ENCODE measurements at regions of chr9 and their contacts with region 1.

Region 1: GRCh38 chr9:78035383-78035993 is 3.9 kb upstream of the GNAQ start:
- DNase-seq: peak; percentile 69
- H3K4me3 Mint-ChIP-seq: peak overlapping the region; percentile 34
- H3K27ac Mint-ChIP-seq: no peak overlapping the region
- H3K4me1 Mint-ChIP-seq: peaks cover 28% of the 10 kb centered on the region
- H3K27me3 Mint-ChIP-seq: no peaks in the 10 kb centered on the region

Region 2: GRCh38 chr9:77177161-77177893 is 858.2 kb before region 1 on chr9 and contains the start of gene VPS13A:
- CTCF ChIA-PET with region 1: interaction called, 3 read pairs
- intact Hi-C with region 1: loop called (anchors 5 kb)
- DNase-seq: peak; percentile 96
- H3K4me3 Mint-ChIP-seq: peak within 1 kb of the TSS; percentile 80
- H3K27ac Mint-ChIP-seq: peak within 1 kb of the TSS; percentile 79
- H3K4me1 Mint-ChIP-seq: peaks cover 23% of the 10 kb centered on the region
- H3K27me3 Mint-ChIP-seq: no peaks in the 10 kb centered on the region
- total RNA-seq, gene VPS13A: 26.8 to 26.9 TPM

Region 3: GRCh38 chr9:77648234-77649120 is 387.0 kb before region 1 on chr9 and contains the start of gene GNA14:
- CTCF ChIA-PET with region 1: interaction called, 5 read pairs
- intact Hi-C with region 1: loop called (anchors 2 kb)
- DNase-seq: peak; percentile 34
- H3K4me3 Mint-ChIP-seq: peak within 1 kb of the TSS; percentile 66
- H3K27ac Mint-ChIP-seq: no peak within 1 kb of the TSS
- H3K4me1 Mint-ChIP-seq: peaks cover 10% of the 10 kb centered on the region
- H3K27me3 Mint-ChIP-seq: peaks cover 43% of the 10 kb centered on the region
- total RNA-seq, gene GNA14: not detected

Region 4: DNA sequence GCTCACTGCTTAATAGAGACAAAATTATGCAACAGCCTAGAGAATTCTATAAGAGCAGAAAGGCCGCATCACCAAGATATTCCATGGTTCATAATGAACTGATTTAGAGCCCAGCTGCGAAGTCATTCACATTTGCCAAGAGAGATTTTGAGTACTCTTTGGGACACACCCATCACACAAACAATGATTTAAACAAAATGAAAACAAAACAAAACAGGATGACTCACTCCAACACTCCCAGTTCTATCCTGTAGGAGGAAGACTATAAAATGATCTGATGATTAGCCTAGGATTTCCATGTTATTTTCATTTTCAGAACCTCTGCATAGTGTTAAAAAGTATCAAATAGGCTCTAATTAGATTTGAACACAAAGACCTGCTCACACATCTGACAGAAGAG is 241.6 kb before region 1 on chr9:
- CTCF ChIA-PET with region 1: interaction called, 10 read pairs
- intact Hi-C with region 1: no loop called
- DNase-seq: no peak
- H3K4me3 Mint-ChIP-seq: no peak overlapping the region
- H3K27ac Mint-ChIP-seq: no peak overlapping the region
- H3K4me1 Mint-ChIP-seq: no peaks in the 10 kb centered on the region
- H3K27me3 Mint-ChIP-seq: no peaks in the 10 kb centered on the region

Region 5: GRCh38 chr9:77977210-77977611 is 58.3 kb before region 1 on chr9:
- CTCF ChIA-PET with region 1: interaction called, 85 read pairs
- intact Hi-C with region 1: loop called (anchors 1 kb)
- DNase-seq: peak; percentile 80
- H3K4me3 Mint-ChIP-seq: peak overlapping the region; percentile 15
- H3K27ac Mint-ChIP-seq: peak overlapping the region; percentile 83
- H3K4me1 Mint-ChIP-seq: peaks cover 55% of the 10 kb centered on the region
- H3K27me3 Mint-ChIP-seq: no peaks in the 10 kb centered on the region

Region 6: GRCh38 chr9:78074385-78075291 is 39.1 kb after region 1 on chr9:
- CTCF ChIA-PET with region 1: interaction called, 3 read pairs
- intact Hi-C with region 1: loop called (anchors 1 kb)
- DNase-seq: peak; percentile 54
- H3K4me3 Mint-ChIP-seq: no peak overlapping the region
- H3K27ac Mint-ChIP-seq: peak overlapping the region; percentile 81
- H3K4me1 Mint-ChIP-seq: peaks cover 43% of the 10 kb centered on the region
- H3K27me3 Mint-ChIP-seq: no peaks in the 10 kb centered on the region

Region 7: DNA sequence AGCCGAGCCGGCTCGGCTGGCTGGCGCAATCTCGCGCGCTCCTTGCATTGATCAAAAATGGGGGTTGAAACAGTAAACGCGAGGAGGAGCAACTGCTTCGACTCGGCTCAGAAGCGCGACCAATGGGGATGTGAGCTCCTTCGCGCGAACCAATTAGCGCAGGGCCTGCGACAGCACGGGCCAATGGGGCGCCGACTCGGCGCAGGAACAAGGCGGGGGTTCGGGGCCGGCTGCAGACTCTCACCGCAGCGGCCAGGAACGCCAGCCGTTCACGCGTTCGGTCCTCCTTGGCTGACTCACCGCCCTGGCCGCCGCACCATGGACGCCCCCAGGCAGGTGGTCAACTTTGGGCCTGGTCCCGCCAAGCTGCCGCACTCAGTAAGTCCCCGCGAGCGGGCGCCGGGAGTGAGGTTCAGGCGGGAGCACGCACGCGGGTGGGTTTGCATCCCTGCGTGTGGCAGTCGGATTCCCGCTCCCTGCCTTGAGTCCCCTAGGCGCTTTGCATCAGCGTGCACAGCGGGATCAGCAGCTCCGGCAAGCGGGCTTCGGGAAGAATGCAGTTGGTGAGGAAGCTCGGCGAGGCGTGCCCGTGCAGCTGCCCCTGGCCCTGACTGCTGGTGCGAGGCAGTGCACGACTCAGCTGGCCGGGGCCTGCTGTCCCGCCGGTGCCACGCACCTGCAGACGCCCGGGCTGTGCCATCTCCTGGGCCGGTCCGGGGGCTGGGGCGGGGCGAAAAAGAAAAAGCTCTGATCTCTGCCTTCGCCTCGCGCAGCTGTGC is 261.6 kb after region 1 on chr9 and contains the start of gene PSAT1:
- CTCF ChIA-PET with region 1: no interaction called
- intact Hi-C with region 1: loop called (anchors 2 kb)
- DNase-seq: peak; percentile 95
- H3K4me3 Mint-ChIP-seq: peak within 1 kb of the TSS; percentile 81
- H3K27ac Mint-ChIP-seq: peak within 1 kb of the TSS; percentile 94
- H3K4me1 Mint-ChIP-seq: peaks cover 40% of the 10 kb centered on the region
- H3K27me3 Mint-ChIP-seq: no peaks in the 10 kb centered on the region
- total RNA-seq, gene PSAT1: 235 to 240 TPM

Region 8: DNA sequence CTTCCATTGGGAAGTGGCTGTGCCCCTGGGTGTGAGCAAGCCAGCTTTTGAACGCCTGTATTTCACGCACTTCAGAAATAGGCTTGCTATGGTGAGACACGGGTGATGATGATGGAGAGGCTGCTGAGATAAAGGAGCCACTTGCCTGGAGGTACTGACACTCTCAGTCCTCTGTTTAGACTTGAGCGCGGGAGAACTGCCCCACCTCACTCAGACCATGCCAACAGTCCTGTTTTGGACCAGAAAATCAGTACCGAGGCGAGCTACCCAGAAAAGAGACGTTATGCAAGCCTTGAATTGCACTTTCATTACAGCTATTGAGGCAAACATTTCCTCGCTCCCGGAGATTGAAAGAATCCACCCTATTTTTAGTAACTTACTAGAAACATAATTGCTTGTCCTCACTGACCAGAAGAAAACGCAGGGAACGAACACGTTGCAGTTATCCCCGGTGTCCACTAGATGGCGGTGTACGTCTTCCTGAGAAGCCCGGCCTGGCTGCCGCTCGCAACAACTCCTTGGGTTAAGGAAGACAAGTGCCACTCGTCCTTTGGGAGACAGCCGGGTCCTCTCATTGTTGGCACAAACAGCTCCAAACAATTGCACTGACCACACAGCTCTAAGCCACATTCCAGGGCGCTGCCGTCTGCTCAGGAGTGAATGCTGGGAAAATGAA is 403.8 kb after region 1 on chr9:
- CTCF ChIA-PET with region 1: no interaction called
- intact Hi-C with region 1: no loop called
- DNase-seq: peak; percentile 79
- H3K4me3 Mint-ChIP-seq: no peak overlapping the region
- H3K27ac Mint-ChIP-seq: no peak overlapping the region
- H3K4me1 Mint-ChIP-seq: peaks cover 4% of the 10 kb centered on the region
- H3K27me3 Mint-ChIP-seq: peaks cover 21% of the 10 kb centered on the region

Region 9: GRCh38 chr9:78525986-78526560 is 490.6 kb after region 1 on chr9:
- CTCF ChIA-PET with region 1: no interaction called
- intact Hi-C with region 1: no loop called
- DNase-seq: no peak
- H3K4me3 Mint-ChIP-seq: no peak overlapping the region
- H3K27ac Mint-ChIP-seq: no peak overlapping the region
- H3K4me1 Mint-ChIP-seq: no peaks in the 10 kb centered on the region
- H3K27me3 Mint-ChIP-seq: no peaks in the 10 kb centered on the region

Measured in activated naive CD4-positive, alpha-beta T cell treated with anti-CD3 and anti-CD28 coated beads for 36 hours (primary cell).